Activated naive CD4-positive, alpha-beta T cell treated with anti-CD3 and anti-CD28 coated beads for 36 hours (primary cell): ENCODE measurements at regions of chr3 and their contacts with region 1.

Region 1: DNA sequence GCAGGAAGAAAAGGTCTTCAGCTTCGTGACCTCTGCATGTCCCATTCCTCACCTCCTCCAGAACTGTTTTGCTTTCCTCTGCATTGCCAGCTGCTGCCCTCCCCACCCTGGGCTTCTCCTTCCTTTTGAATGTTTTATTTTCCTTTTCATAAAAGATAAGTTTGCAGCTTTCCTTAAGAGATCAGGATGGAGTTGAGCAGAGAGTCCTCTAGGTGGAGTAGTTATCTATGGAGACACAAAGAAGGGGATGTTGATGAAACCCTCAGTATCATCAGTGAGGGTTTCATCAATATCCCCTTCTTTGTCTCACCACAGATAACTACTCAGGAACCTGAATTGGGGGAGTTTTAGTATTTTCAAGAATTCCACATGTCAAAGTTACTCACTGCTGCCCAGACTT is 19.0 kb upstream of the SLC25A36 start:
- DNase-seq: no peak
- H3K4me3 Mint-ChIP-seq: no peak overlapping the region
- H3K27ac Mint-ChIP-seq: no peak overlapping the region
- H3K4me1 Mint-ChIP-seq: no peaks in the 10 kb centered on the region
- H3K27me3 Mint-ChIP-seq: peaks cover 5% of the 10 kb centered on the region

Region 2: DNA sequence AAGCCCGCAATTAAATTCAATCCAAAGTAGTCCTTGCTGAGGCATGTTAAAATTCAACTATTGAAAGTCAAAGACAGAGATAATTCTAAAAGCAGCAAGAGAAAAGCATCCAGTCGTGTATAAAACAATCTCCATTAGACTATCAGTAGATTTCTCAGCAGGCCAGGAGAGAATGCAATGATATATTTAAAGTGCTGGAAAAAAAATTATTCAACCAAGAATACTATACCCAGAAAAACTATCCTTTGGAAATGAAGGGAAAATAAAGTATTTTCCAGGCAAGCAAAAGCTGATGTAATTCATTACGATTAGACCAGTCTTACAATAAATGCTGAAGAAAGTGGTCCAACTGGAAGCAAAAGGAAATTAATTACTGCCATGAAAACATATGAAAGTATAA is 131.3 kb before region 1 on chr3:
- CTCF ChIA-PET with region 1: no interaction called
- intact Hi-C with region 1: no loop called
- DNase-seq: no peak
- H3K4me3 Mint-ChIP-seq: no peak overlapping the region
- H3K27ac Mint-ChIP-seq: no peak overlapping the region
- H3K4me1 Mint-ChIP-seq: no peaks in the 10 kb centered on the region
- H3K27me3 Mint-ChIP-seq: no peaks in the 10 kb centered on the region

Region 3: GRCh38 chr3:140972833-140973232 is 50.2 kb after region 1 on chr3:
- CTCF ChIA-PET with region 1: no interaction called
- intact Hi-C with region 1: loop called (anchors 2 kb)
- DNase-seq: no peak
- H3K4me3 Mint-ChIP-seq: no peak overlapping the region
- H3K27ac Mint-ChIP-seq: no peak overlapping the region
- H3K4me1 Mint-ChIP-seq: peaks cover 4% of the 10 kb centered on the region
- H3K27me3 Mint-ChIP-seq: no peaks in the 10 kb centered on the region